HAP-1 (cell line): ENCODE measurements at regions of chr15 and their contacts with region 1.

Region 1: GRCh38 chr15:40044717-40045571 is 6.0 kb upstream of the SRP14 start:
- DNase-seq: peak; percentile 81 to 93
- H3K4me3 ChIP-seq: no peak overlapping the region
- H3K4me1 ChIP-seq: peaks cover 10% of the 10 kb centered on the region
- H3K27me3 ChIP-seq: no peaks in the 10 kb centered on the region

Region 2: DNA sequence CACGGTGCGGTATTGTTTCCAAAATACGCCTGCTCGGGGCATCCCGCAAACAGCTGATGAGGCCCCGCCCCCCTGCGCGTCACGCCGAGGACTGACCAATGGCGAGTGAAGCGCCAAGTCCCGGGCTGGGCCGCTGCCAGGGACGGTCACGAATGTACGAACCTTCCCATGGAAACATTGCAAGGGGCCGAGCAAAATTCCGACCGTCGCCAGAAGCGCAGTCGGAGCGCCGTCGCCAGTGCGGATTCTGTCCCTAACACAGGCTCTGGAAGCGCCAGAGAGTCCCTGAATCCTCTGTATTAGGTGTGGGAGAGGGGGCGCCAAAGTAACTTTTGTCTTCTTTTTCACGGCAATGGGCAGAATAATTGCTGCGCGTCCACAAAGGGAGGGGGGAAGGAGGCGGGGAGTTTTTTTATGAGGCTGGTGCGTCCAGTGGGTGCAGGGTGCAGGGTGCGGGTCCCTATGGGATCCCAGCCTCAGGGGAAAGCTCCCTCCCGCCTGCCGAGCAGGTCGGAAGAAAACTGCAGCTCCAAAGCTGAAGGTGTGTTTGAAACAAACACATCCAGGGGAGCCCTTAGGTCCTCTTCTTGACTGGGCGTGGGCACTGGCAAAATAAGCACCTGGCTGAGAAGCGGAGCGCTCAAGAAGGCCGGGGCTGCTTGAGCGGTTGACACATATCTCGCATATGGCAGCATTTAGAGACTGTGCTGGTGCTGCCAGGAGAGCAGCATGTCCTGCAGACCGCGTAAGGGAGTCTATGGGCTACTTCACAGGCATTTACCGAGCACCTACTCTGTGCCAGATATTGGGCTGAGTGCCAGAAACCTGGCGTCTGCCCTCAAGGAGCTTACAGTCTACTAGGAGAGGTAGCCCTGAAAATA is 64.2 kb after region 1 on chr15 and contains the start of gene BMF:
- in situ Hi-C with region 1: loop called (anchors 5 kb)
- DNase-seq: peak; percentile 97 to 100
- H3K4me3 ChIP-seq: peak within 1 kb of the TSS; percentile 46
- H3K4me1 ChIP-seq: peaks cover 43% of the 10 kb centered on the region
- H3K27me3 ChIP-seq: no peaks in the 10 kb centered on the region

Region 3: GRCh38 chr15:40160689-40161688 is 116.0 kb after region 1 on chr15 and contains the start of gene BUB1B:
- in situ Hi-C with region 1: loop called (anchors 5 kb)
- DNase-seq: peak; percentile 93 to 97
- H3K4me3 ChIP-seq: peak within 1 kb of the TSS; percentile 85
- H3K4me1 ChIP-seq: peaks cover 10% of the 10 kb centered on the region
- H3K27me3 ChIP-seq: no peaks in the 10 kb centered on the region

Region 4: GRCh38 chr15:40190591-40190990 is 145.6 kb after region 1 on chr15:
- in situ Hi-C with region 1: loop called (anchors 10 kb)
- DNase-seq: no peak
- H3K4me3 ChIP-seq: no peak overlapping the region
- H3K4me1 ChIP-seq: peaks cover 3% of the 10 kb centered on the region; the same call in 1 of the 2 replicates
- H3K27me3 ChIP-seq: no peaks in the 10 kb centered on the region

Region 5: GRCh38 chr15:40274350-40275274 is 229.7 kb after region 1 on chr15:
- in situ Hi-C with region 1: loop called (anchors 10 kb)
- DNase-seq: peak; percentile 68 to 90
- H3K4me3 ChIP-seq: no peak overlapping the region
- H3K4me1 ChIP-seq: no peaks in the 10 kb centered on the region
- H3K27me3 ChIP-seq: no peaks in the 10 kb centered on the region

Region 6: GRCh38 chr15:40290918-40291574 is 246.1 kb after region 1 on chr15:
- in situ Hi-C with region 1: no loop called
- DNase-seq: no peak
- H3K4me3 ChIP-seq: no peak overlapping the region
- H3K4me1 ChIP-seq: peaks cover 5% of the 10 kb centered on the region
- H3K27me3 ChIP-seq: no peaks in the 10 kb centered on the region

Region 7: DNA sequence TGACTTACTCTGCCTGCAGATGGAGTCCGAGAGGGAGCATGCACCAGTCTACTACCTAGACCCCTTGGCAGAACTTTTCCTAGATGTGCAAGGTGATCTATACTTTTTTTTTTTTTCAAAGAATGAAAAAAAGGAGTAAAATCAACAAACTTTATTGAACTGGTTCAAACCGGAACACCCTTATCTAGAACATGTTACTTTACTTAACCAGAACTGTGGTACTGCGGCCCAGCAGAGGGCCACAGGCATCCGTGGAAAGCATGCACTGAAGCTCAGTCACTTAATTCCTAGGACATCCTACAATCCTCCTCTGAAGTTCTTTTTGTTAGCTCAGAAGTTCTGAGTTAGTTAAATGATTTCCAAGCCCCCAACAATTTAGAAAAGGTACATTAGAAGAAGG is 929.9 kb after region 1 on chr15:
- in situ Hi-C with region 1: no loop called
- DNase-seq: no peak
- H3K4me3 ChIP-seq: no peak overlapping the region
- H3K4me1 ChIP-seq: peaks cover 4% of the 10 kb centered on the region
- H3K27me3 ChIP-seq: no peaks in the 10 kb centered on the region